ENCODE measurements at regions of chr5 and their contacts with region 1.

Region 1: DNA sequence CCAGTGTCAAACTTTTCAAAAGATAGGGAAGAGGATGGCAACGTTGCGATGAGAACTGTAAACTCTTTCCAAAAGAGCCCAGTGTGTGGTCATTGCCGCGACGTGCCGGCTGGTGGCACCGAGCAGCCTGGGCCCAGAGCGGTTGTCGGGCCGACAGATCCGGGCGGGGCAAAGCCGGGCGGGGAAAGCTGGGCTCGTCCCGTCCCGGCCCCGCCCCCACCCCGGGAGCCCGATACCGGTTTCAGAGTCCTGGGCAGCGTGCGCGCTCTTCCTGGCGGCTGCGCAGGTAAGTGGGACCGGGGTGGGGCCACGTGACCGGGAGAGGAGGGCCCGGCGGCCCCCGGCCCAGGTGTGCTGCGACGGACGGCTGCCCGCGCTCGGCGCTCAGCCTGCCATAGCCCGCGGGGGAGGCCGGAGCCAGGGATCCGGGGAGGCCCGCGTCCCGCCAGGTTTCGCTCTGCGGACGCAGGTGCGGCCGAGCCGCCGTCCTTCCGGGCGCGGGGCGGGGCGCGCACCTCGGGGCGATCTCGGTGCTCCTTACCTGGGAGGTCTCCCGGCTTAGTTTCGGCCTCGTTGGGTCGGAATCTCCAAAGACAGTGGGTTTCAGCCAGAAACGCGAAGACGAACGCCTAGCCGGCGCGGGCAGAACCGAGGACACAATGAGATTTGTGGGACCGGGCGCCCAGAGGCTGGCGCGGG is at the start of gene MARVELD2:
- DNase-seq: peak; percentile 82 to 91
- H3K4me3 ChIP-seq: peak within 1 kb of the TSS; percentile 82
- H3K27ac ChIP-seq: peak within 1 kb of the TSS; percentile 93
- H3K4me1 ChIP-seq: peaks cover 20% of the 10 kb centered on the region
- H3K27me3 ChIP-seq: no peaks in the 10 kb centered on the region
- CTCF ChIP-seq: peak; percentile 49
- total RNA-seq, gene MARVELD2: 16.2 and 21.0 TPM in 2 replicates

Region 2: DNA sequence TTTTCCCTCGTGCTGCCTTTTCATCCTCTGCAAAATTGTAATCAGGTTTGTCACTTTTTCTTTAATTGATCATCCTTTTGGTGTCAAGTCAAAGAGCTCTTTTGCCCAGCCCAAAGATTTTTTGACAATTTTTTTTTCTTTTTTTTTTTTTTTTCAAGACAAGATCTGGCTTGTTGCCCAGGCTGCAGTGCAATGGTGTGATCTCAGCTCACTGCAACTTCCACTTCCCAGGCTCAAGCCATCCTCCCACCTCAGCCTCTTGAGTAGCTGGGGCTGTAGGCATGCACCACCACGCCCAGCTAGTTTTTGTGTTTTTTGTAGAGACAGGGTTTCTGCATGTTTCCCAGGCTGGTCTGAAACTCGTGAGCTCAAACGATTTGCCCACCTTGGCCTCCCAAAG is 143.7 kb before region 1 on chr5:
- CTCF ChIA-PET with region 1: interaction called, 13 read pairs
- POLR2A ChIA-PET with region 1: no interaction called
- intact Hi-C with region 1: no loop called
- DNase-seq: peak in 1 of 2 experiments; percentile 37
- H3K4me3 ChIP-seq: no peak overlapping the region
- H3K27ac ChIP-seq: no peak overlapping the region
- H3K4me1 ChIP-seq: no peaks in the 10 kb centered on the region
- H3K27me3 ChIP-seq: no peaks in the 10 kb centered on the region
- CTCF ChIP-seq: no peak